Heart right ventricle (tissue), 16 donors: ENCODE measurements at regions of chr10 and their contacts with region 1.

Region 1: GRCh38 chr10:106436123-106436740 is 728.3 kb downstream of the SORCS1 start:
- DNase-seq: no peak
- ATAC-seq: no peak
- H3K4me3 ChIP-seq: no peak overlapping the region
- H3K27ac ChIP-seq: no peak overlapping the region
- H3K4me1 ChIP-seq: no peaks in the 10 kb centered on the region
- H3K27me3 ChIP-seq: no peaks in the 10 kb centered on the region
- CTCF ChIP-seq: no peak

Region 2: DNA sequence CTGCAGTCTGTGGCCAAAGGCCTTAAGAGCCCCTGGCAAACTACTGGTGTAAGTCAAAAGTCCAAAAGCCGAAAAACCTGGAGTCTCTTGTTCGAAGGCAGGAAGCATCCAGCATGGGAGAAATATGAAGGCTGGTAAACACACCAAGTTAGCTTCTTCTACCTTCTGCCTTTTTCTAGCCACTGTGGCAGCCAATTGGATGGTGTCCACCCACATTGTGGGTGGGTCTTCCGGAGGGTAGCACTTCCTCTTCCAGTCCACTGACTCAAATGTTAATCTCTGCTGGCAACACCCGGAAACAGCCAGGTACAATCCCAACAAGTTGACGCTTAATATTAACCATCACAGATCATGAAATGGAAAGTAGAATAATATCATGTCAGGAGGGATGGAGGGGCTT is 99.4 kb before region 1 on chr10:
- intact Hi-C with region 1: no loop called
- DNase-seq: no peak
- ATAC-seq: no peak
- H3K4me3 ChIP-seq: no peak overlapping the region
- H3K27ac ChIP-seq: no peak overlapping the region
- H3K4me1 ChIP-seq: no peaks in the 10 kb centered on the region
- H3K27me3 ChIP-seq: no peaks in the 10 kb centered on the region
- CTCF ChIP-seq: no peak

Region 3: GRCh38 chr10:106592396-106592795 is 156.2 kb after region 1 on chr10:
- intact Hi-C with region 1: no loop called
- DNase-seq: no peak
- ATAC-seq: peak in 1 of 8 donors; percentile 14
- H3K4me3 ChIP-seq: no peak overlapping the region
- H3K27ac ChIP-seq: no peak overlapping the region
- H3K4me1 ChIP-seq: no peaks in the 10 kb centered on the region
- H3K27me3 ChIP-seq: no peaks in the 10 kb centered on the region
- CTCF ChIP-seq: no peak

Region 4: GRCh38 chr10:107011105-107011504 is 574.9 kb after region 1 on chr10:
- intact Hi-C with region 1: loop called in 1 of 10 experiments (anchors 10 kb)
- DNase-seq: no peak
- ATAC-seq: no peak
- H3K4me3 ChIP-seq: no peak overlapping the region
- H3K27ac ChIP-seq: no peak overlapping the region
- H3K4me1 ChIP-seq: no peaks in the 10 kb centered on the region
- H3K27me3 ChIP-seq: peaks cover 0 to 3% (median 0%) of the 10 kb centered on the region in 7 donors
- CTCF ChIP-seq: peak in 1 of 9 donors; percentile 21

Region 5: GRCh38 chr10:107477266-107477665 is 1041.0 kb after region 1 on chr10:
- intact Hi-C with region 1: loop called in 1 of 10 experiments (anchors 10 kb)
- DNase-seq: no peak
- ATAC-seq: no peak
- H3K4me3 ChIP-seq: no peak overlapping the region
- H3K27ac ChIP-seq: no peak overlapping the region
- H3K4me1 ChIP-seq: no peaks in the 10 kb centered on the region
- H3K27me3 ChIP-seq: no peaks in the 10 kb centered on the region
- CTCF ChIP-seq: no peak